CD8-positive, alpha-beta T cell (primary cell): ENCODE measurements at regions of chr4 and their contacts with region 1.

Region 1: GRCh38 chr4:113256946-113257345 is 207.5 kb downstream of the ANK2 start:
- DNase-seq: no peak
- ATAC-seq: no peak
- H3K4me3 ChIP-seq: no peak overlapping the region
- H3K4me3 Mint-ChIP-seq: no peak overlapping the region
- H3K27ac ChIP-seq: no peak overlapping the region
- H3K27ac Mint-ChIP-seq: no peak overlapping the region
- H3K4me1 ChIP-seq: no peaks in the 10 kb centered on the region
- H3K4me1 Mint-ChIP-seq: no peaks in the 10 kb centered on the region
- H3K27me3 ChIP-seq: no peaks in the 10 kb centered on the region
- H3K27me3 Mint-ChIP-seq: no peaks in the 10 kb centered on the region
- CTCF ChIP-seq: no peak

Region 2: DNA sequence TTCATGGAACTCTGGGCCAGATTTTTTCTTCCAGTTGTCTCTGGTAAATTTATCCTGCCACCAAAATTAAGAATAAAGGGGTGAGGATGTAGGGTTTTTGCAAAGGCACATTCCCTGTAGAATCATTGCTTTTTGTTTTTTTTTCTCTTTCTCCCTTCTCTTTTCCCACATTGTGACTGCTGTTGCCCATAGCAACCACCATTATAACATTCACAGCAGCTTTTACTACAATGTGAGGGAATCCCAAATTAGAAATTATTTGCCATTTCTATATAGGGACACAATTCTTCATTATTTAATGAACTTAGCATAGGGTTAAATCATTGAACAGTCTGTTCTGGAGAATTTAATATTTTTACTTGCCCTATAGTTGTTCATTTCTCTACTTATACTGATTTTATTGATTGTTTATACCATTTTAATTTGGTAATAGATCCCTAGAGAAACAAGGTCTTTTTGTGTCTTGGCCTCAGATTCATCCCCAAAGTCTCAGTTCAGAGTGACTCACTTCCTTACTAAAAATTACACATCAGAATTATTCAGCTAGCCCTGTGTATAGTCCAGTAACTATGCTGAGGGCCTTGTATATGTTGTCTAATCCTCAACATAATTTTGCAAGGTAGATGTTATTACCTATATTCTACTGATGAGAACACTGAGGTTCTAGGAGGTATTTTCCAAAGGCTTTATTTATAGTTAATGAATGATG is 288.3 kb before region 1 on chr4:
- CTCF ChIA-PET with region 1: no interaction called
- POLR2A ChIA-PET with region 1: no interaction called
- intact Hi-C with region 1: no loop called
- DNase-seq: no peak
- ATAC-seq: no peak
- H3K4me3 ChIP-seq: no peak overlapping the region
- H3K4me3 Mint-ChIP-seq: no peak overlapping the region
- H3K27ac ChIP-seq: no peak overlapping the region
- H3K27ac Mint-ChIP-seq: no peak overlapping the region
- H3K4me1 ChIP-seq: no peaks in the 10 kb centered on the region
- H3K4me1 Mint-ChIP-seq: no peaks in the 10 kb centered on the region
- H3K27me3 ChIP-seq: no peaks in the 10 kb centered on the region
- H3K27me3 Mint-ChIP-seq: peaks cover 11% of the 10 kb centered on the region
- CTCF ChIP-seq: no peak

Region 3: GRCh38 chr4:115082633-115083032 is 1825.7 kb after region 1 on chr4:
- CTCF ChIA-PET with region 1: no interaction called
- POLR2A ChIA-PET with region 1: no interaction called
- intact Hi-C with region 1: loop called in 1 of 2 experiments (anchors 5 kb)
- DNase-seq: no peak
- ATAC-seq: no peak
- H3K4me3 ChIP-seq: no peak overlapping the region
- H3K4me3 Mint-ChIP-seq: no peak overlapping the region
- H3K27ac ChIP-seq: no peak overlapping the region
- H3K27ac Mint-ChIP-seq: no peak overlapping the region
- H3K4me1 ChIP-seq: no peaks in the 10 kb centered on the region
- H3K4me1 Mint-ChIP-seq: no peaks in the 10 kb centered on the region
- H3K27me3 ChIP-seq: no peaks in the 10 kb centered on the region
- H3K27me3 Mint-ChIP-seq: peaks cover 2% of the 10 kb centered on the region
- CTCF ChIP-seq: no peak